Heart left ventricle (tissue), 16 donors: ENCODE measurements at regions of chr3 and their contacts with region 1.

Region 1: DNA sequence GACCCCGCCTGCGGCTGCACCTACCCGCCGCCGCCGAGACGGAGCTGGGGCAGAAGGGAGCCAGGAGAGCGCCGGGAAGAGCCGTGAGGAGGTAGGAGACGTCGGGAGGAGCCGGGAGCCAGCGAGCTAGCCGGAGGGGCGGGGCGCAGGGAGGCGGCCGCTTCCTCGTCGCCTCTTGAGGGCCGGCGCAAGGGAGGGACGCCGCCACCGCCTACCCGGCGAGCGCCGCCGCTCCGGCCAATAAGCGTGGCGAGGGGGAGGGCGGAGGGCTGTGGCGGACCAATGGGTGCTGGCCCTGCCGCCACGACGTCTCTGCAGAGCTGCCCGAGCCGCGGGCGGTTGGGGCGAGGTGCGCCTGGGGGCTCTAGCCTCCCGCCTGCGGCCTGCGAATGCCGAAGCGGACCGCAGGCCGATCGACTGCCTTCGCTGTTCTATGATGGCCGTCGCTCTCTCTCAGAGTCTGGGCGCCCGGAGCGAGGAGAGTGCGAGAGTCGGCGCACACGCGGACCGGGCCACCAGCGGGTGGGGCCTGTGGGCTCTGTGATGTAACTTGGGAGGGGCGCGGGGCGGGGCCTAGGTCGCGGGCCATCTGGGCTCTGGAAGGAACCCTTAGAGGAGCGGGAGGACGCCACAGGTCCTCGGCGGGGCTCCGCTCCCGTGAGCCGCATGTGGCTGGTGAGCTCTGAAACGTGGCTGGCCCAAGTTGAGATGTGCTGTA is 72.7 kb upstream of the MAP4 start:
- DNase-seq: peak; percentile 97 to 99 (median 98)
- ATAC-seq: peak; percentile 85 to 98 (median 94)
- H3K4me3 ChIP-seq: peak overlapping the region; percentile 55 to 100 (median 94)
- H3K27ac ChIP-seq: peak overlapping the region; percentile 90 to 100 (median 98)
- H3K4me1 ChIP-seq: peaks cover 0 to 44% (median 39%) of the 10 kb centered on the region in 12 donors
- H3K27me3 ChIP-seq: no peaks in the 10 kb centered on the region
- CTCF ChIP-seq: peak in 1 of 12 donors; percentile 10
- POLR2A ChIP-seq: peak; percentile 39 to 87

Region 2: DNA sequence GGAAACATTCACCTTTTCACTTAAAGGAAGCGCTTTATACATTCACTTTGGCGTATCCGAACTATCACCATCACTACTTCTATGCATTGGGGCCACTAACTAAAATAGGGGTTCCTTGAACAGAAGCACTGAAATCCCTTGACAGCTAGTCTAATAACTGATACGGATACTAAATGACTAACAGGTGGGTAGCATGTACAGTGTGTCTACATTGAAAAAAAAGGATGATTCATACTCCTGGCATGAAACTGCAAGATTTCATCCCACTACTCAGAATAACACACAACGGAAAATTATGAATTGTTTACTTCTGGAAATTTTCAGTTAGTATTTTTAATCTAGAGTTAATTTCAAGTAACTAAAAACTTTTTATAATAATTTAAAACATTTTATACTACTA is 403.9 kb before region 1 on chr3:
- intact Hi-C with region 1: no loop called
- DNase-seq: no peak
- ATAC-seq: no peak
- H3K4me3 ChIP-seq: no peak overlapping the region
- H3K27ac ChIP-seq: no peak overlapping the region
- H3K4me1 ChIP-seq: no peaks in the 10 kb centered on the region
- H3K27me3 ChIP-seq: no peaks in the 10 kb centered on the region
- CTCF ChIP-seq: no peak
- POLR2A ChIP-seq: no peak

Region 3: GRCh38 chr3:48013288-48013980 is 75.5 kb before region 1 on chr3:
- intact Hi-C with region 1: loop called in 6 of 10 experiments (anchors 2 to 5 kb)
- DNase-seq: peak in 3 of 5 donors; percentile 37 to 55 (median 38)
- ATAC-seq: peak; percentile 88 to 92 (median 89)
- H3K4me3 ChIP-seq: peak overlapping the region in 8 of 12 donors; percentile 22 to 50 (median 42)
- H3K27ac ChIP-seq: peak overlapping the region; percentile 58 to 87 (median 80)
- H3K4me1 ChIP-seq: peaks cover 0 to 97% (median 60%) of the 10 kb centered on the region in 12 donors
- H3K27me3 ChIP-seq: no peaks in the 10 kb centered on the region
- CTCF ChIP-seq: no peak
- POLR2A ChIP-seq: no peak

Region 4: GRCh38 chr3:48039487-48040190 is 49.3 kb before region 1 on chr3:
- intact Hi-C with region 1: loop called in 2 of 10 experiments (anchors 5 to 10 kb)
- DNase-seq: no peak
- ATAC-seq: peak in 2 of 4 donors; percentile 45 to 71
- H3K4me3 ChIP-seq: no peak overlapping the region
- H3K27ac ChIP-seq: peak overlapping the region in 11 of 12 donors; percentile 40 to 78 (median 70)
- H3K4me1 ChIP-seq: peaks cover 5 to 75% (median 51%) of the 10 kb centered on the region in 12 donors
- H3K27me3 ChIP-seq: no peaks in the 10 kb centered on the region
- CTCF ChIP-seq: no peak
- POLR2A ChIP-seq: no peak

Region 5: GRCh38 chr3:48135552-48136495 is 46.9 kb after region 1 on chr3:
- intact Hi-C with region 1: loop called in 4 of 10 experiments (anchors 2 to 5 kb)
- DNase-seq: no peak
- ATAC-seq: no peak
- H3K4me3 ChIP-seq: no peak overlapping the region
- H3K27ac ChIP-seq: peak overlapping the region in 1 of 12 donors; percentile 16
- H3K4me1 ChIP-seq: peaks cover 0 to 26% (median 16%) of the 10 kb centered on the region in 12 donors
- H3K27me3 ChIP-seq: no peaks in the 10 kb centered on the region
- CTCF ChIP-seq: no peak
- POLR2A ChIP-seq: no peak

Region 6: GRCh38 chr3:48151058-48151806 is 62.3 kb after region 1 on chr3:
- intact Hi-C with region 1: loop called in 6 of 10 experiments (anchors 2 to 5 kb)
- DNase-seq: peak; percentile 80 to 86 (median 82)
- ATAC-seq: peak; percentile 94 to 98 (median 96)
- H3K4me3 ChIP-seq: peak overlapping the region in 2 of 12 donors; percentile 8
- H3K27ac ChIP-seq: peak overlapping the region in 10 of 12 donors; percentile 1 to 74 (median 59)
- H3K4me1 ChIP-seq: peaks cover 0 to 22% (median 17%) of the 10 kb centered on the region in 12 donors
- H3K27me3 ChIP-seq: no peaks in the 10 kb centered on the region
- CTCF ChIP-seq: peak; percentile 53 to 93 (median 84)
- POLR2A ChIP-seq: no peak